Activated CD4-positive, alpha-beta T cell treated with anti-CD3 and anti-CD28 coated beads for 36 hours (primary cell): ENCODE measurements at regions of chrX and their contacts with region 1.

Region 1: DNA sequence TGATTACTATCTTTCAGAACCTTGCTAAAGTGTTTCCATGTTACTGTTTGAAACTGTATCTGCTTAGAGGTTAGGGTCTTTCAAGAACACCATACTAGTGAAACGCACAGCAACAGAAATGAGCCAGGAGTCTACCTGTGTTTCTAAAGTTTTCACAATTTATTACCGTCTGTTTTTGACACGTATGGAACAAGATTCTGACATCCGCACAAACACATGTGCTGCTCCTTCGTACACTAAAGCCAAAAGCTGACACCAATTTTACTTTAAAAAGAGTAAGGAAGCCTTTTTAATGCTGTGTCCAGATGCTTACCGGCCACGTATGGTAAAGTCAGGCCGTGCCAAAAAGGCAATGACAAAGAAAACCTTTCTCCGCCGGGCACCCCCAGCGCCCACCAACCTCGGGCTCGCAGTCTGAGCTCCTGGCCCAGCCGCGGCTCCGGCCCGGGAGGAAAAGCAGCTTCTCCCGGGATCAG is 532 bp downstream of the RPS4X start:
- DNase-seq: no peak
- ATAC-seq: no peak
- H3K4me3 Mint-ChIP-seq: peak overlapping the region; percentile 79
- H3K27ac Mint-ChIP-seq: peak overlapping the region; percentile 90
- H3K4me1 Mint-ChIP-seq: peaks cover 38% of the 10 kb centered on the region
- H3K27me3 Mint-ChIP-seq: peaks cover 10% of the 10 kb centered on the region

Region 2: DNA sequence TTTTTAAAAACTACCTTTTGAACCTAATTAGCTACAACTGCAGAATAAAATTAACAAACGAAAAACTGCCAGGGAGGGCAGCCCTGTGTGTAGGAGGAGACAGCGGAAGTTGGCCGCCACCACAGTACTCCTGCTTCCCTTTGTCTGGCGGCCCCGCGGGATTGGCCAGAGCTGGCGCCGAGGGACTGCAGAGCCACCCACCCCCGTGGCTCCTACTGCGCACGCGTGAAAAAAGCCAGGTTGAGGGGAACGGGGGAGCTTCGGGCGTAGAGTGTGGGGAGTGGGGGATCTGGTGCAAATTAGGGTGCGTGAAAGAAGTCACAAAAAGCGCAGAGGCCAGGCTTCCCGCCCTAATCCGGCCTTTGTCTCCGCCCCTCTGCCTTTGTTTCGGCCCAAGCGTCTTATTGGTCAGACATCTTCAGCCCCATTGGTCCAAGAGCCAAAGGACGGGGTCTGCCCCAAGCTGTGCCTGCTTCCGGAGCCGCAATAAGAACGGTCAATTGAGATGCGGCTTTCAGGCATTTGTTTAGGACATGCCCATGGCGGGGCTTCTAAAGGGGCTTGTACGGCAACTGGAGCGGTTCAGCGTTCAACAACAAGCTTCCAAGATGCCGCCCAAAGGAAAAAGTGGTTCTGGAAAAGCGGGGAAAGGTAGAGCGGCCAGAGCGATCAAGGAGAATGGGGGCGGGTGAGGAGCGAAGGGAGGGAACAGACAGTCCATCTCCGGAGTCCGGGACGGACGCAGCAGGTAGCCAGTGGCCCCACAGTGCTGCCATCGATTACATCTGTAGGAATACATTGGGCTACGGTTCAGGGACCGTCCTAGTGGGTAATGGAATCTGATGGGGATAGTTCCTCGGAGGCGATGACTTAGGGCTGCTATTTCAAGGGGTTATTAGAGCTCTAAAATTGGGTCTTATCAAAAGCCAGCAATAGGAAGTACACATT is 95.1 kb before region 1 on chrX and contains the start of gene PIN4:
- CTCF ChIA-PET with region 1: interaction called, 3 read pairs
- POLR2A ChIA-PET with region 1: interaction called, 8 read pairs
- intact Hi-C with region 1: loop called (anchors 1 to 2 kb)
- DNase-seq: peak; percentile 88
- ATAC-seq: peak; percentile 96
- H3K4me3 Mint-ChIP-seq: no peak within 1 kb of the TSS
- H3K27ac Mint-ChIP-seq: no peak within 1 kb of the TSS
- H3K4me1 Mint-ChIP-seq: peaks cover 16% of the 10 kb centered on the region
- H3K27me3 Mint-ChIP-seq: no peaks in the 10 kb centered on the region
- total RNA-seq, gene PIN4: 2.3 to 3.2 TPM

Region 3: GRCh38 chrX:72245461-72246089 is 30.9 kb before region 1 on chrX:
- CTCF ChIA-PET with region 1: interaction called, 9 read pairs
- POLR2A ChIA-PET with region 1: interaction called, 3 read pairs
- intact Hi-C with region 1: loop called in 1 of 2 experiments (anchors 2 kb)
- DNase-seq: peak; percentile 61
- ATAC-seq: peak; percentile 63
- H3K4me3 Mint-ChIP-seq: no peak overlapping the region
- H3K27ac Mint-ChIP-seq: no peak overlapping the region
- H3K4me1 Mint-ChIP-seq: peaks cover 9% of the 10 kb centered on the region
- H3K27me3 Mint-ChIP-seq: no peaks in the 10 kb centered on the region

Region 4: DNA sequence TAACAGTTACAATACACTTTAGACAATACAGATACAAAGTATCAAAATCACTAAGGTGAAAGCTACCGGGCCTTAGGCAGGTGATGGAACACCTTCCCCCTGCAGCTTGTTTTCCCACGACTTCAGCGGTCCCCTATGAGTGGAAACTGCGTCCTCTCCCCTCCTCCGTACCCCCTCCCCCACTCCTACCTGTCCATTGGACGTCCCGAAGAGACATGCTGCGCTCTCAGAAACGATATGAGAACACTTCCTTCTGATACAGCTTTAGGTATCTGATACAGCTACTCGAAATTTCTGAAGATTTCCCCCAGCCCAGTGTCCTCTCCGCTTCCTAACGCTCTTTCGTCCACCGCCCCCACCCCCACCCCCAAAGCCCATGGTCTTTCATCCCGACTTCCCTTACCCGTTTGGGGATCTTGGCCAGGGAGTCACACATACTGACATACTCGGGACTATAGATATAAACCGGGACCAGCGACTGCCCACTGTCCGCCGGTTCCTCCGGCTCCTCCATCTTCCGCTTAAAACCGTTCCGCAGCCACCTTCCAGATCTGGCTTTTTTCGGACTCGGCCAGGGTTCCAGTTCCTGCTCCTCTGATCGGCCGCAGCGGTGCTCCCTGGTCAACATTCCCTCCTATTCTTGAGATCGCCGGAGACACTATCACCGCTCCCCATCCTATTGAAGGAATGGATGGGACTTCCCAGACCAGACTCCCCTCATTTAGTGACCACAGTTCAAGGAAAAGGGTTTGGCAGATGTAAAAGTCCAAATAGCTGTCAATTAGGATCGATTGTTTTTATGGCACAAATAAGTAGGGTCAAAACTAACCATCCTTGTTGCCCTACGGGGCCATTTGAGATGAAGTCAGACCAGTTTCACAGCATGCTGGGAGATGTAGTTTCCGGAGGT is 296.0 kb after region 1 on chrX and contains the start of gene HDAC8:
- CTCF ChIA-PET with region 1: no interaction called
- POLR2A ChIA-PET with region 1: no interaction called
- intact Hi-C with region 1: loop called in 1 of 2 experiments (anchors 1 kb)
- DNase-seq: peak; percentile 59
- ATAC-seq: peak; percentile 90
- H3K4me3 Mint-ChIP-seq: peak within 1 kb of the TSS; percentile 97
- H3K27ac Mint-ChIP-seq: peak within 1 kb of the TSS; percentile 95
- H3K4me1 Mint-ChIP-seq: peaks cover 9% of the 10 kb centered on the region
- H3K27me3 Mint-ChIP-seq: no peaks in the 10 kb centered on the region
- total RNA-seq, gene HDAC8: 13.3 to 16.9 TPM

Region 5: GRCh38 chrX:73943693-73944562 is 1667.4 kb after region 1 on chrX:
- CTCF ChIA-PET with region 1: no interaction called
- POLR2A ChIA-PET with region 1: no interaction called
- intact Hi-C with region 1: loop called in 1 of 2 experiments (anchors 5 kb)
- DNase-seq: peak; percentile 91
- ATAC-seq: peak; percentile 99
- H3K4me3 Mint-ChIP-seq: peak overlapping the region; percentile 89
- H3K27ac Mint-ChIP-seq: peak overlapping the region; percentile 96
- H3K4me1 Mint-ChIP-seq: peaks cover 15% of the 10 kb centered on the region
- H3K27me3 Mint-ChIP-seq: no peaks in the 10 kb centered on the region